ENCODE measurements at regions of chr1 and their contacts with region 1.

Region 1: DNA sequence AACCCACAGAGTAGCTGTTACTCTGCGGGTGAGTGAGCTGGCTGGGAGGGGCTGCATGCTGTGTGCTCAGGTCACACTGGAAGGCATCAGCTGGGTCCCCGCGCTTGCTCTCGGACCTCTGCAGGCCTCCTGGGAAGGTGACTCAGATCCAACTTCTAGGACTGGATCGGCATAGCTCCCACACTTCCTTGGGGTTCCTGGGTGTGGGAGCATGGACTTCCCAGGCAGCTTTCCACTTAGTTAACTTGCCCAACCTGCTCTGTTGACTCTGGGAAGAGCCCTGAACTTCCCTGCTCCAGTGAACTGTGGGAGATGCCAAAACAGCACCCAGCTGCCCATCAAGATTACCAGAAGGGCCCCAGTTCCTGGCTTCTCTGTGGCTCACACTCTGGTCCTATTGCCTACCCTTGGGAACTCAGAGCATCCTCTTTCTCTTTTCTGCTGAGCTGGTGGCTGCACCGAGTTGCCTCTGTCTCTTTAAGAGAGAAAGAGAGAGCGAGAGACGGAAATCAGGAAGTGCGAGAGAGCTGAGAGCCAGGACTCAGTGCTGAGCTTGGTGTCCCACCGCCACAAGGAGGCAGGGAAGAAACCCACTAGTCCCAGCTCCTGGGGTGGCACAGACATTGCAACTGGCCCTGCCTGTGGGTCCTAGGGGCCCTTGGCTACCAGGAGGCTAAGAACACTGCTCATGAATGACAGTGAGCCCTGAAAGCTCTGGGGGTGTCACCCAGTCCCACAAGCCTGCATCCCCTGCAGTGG is at the start of gene IKBKE:
- DNase-seq: peak; percentile 53
- H3K4me3 Mint-ChIP-seq: peak within 1 kb of the TSS; percentile 94
- H3K27ac Mint-ChIP-seq: peak within 1 kb of the TSS; percentile 94
- H3K4me1 Mint-ChIP-seq: peaks cover 80% of the 10 kb centered on the region
- H3K27me3 Mint-ChIP-seq: no peaks in the 10 kb centered on the region
- total RNA-seq, gene IKBKE: 33.8 and 33.9 TPM in 2 replicates

Region 2: DNA sequence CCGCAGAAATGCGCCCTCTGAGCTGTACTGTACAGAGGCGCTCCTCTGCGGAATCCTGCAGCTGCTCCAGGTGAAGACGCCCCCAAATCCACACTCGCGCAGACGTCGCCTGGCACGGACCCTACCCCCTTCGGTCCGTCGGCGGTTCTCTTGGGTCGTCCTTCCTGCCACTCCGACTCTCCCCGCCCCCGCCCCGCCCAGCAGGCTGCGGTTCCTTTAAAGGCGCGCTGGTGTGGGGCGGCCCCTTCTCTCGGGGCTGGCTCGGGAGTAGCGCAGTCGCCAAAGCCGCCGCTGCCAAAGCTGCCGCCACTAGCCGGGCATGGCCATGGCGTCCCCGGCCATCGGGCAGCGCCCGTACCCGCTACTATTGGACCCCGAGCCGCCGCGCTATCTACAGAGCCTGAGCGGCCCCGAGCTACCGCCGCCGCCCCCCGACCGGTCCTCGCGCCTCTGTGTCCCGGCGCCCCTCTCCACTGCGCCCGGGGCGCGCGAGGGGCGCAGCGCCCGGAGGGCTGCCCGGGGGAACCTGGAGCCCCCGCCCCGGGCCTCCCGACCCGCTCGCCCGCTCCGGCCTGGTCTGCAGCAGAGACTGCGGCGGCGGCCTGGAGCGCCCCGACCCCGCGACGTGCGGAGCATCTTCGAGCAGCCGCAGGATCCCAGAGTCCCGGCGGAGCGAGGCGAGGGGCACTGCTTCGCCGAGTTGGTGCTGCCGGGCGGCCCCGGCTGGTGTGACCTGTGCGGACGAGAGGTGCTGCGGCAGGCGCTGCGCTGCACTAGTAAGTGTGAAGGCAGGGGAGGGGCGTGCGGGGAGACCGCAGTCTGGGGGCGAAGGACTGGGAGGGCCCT is 37.4 kb after region 1 on chr1 and contains the start of gene RASSF5:
- intact Hi-C with region 1: loop called (anchors 5 kb)
- DNase-seq: peak; percentile 74
- H3K4me3 Mint-ChIP-seq: peak within 1 kb of the TSS; percentile 75
- H3K27ac Mint-ChIP-seq: no peak within 1 kb of the TSS
- H3K4me1 Mint-ChIP-seq: peaks cover 30% of the 10 kb centered on the region
- H3K27me3 Mint-ChIP-seq: peaks cover 18% of the 10 kb centered on the region
- total RNA-seq, gene RASSF5: 180 and 182 TPM in 2 replicates

Region 3: DNA sequence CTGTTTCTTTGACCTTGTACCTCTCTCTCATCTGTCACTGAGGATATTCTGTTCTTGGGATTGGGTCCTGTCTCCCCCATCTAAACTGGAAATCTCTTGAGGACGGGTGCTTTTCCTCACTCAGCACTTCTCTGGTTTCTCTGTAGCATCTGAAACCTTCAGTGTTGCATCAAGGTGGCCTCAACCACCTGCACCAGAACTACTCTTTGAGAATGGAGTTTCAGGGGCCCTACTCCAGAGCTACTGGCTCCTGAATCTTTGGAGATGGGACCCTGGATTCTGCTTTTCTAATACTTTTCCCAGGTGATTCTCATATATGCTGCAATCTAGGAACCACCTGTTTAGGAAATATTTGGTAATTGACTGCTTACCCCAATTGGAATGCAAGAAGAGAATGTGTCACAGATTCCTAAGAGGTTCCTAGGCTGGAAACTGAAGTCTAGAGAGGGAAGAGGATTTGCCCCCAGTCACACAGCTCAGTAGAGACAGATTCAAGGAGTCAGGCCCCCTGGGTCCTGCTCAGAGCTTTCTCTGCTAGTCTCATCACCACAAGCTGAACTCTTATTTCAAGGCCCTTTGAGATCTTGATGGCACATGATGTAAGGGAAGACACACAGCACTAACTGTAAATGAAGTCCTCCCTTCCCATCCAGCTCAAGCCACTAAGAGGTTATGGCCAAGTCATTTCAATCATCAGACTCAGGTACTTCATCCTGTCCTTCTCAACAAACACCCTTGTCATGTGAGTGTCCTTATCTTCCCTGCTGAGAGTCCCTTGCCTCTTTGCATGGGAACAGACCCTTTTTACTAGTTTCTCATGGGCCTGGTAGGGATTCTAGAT is 93.5 kb after region 1 on chr1:
- intact Hi-C with region 1: no loop called
- DNase-seq: no peak
- H3K4me3 Mint-ChIP-seq: peak overlapping the region; percentile 67
- H3K27ac Mint-ChIP-seq: peak overlapping the region; percentile 91
- H3K4me1 Mint-ChIP-seq: peaks cover 89% of the 10 kb centered on the region
- H3K27me3 Mint-ChIP-seq: no peaks in the 10 kb centered on the region

Region 4: DNA sequence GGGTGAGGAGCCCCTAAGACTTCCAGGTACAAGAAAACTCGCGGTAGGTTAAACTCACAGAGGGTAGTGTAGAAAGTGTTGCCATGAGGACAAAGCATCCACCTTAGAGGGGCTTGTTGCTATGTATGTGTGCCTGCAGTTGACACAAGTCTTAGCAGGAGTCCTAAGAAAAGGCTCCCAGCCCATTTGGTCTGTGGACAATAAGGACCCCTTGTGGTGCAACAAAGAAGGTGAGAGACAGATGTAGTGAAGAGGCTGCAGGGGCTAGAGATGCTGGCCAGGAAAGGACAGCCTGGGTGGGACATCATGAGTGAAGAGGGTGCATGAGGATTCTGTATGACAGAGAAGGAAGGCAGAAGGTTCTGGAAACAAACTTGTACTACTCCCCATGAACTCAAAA is 338.5 kb after region 1 on chr1:
- intact Hi-C with region 1: loop called (anchors 10 kb)
- DNase-seq: peak; percentile 47
- H3K4me3 Mint-ChIP-seq: no peak overlapping the region
- H3K27ac Mint-ChIP-seq: no peak overlapping the region
- H3K4me1 Mint-ChIP-seq: peaks cover 48% of the 10 kb centered on the region
- H3K27me3 Mint-ChIP-seq: peaks cover 3% of the 10 kb centered on the region

Region 5: DNA sequence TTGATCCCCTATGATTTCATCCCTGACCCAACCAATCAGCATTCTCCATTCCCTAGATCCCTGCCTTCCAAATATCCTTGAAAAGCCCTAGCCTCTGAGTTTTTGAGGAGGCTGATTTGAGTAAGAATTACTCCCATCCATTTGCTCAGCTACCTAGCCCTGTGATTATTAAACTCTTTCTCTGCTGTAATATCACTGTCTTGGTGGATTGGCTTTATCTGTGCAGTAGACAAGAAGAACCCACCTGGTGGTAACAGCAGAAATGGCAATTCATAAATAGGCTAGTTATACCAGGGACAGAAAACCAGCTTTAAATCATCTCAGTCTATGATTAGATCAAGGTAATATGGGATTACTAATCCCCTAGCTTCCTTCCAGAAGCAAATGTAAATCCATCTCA is 408.3 kb after region 1 on chr1:
- intact Hi-C with region 1: no loop called
- DNase-seq: no peak
- H3K4me3 Mint-ChIP-seq: no peak overlapping the region
- H3K27ac Mint-ChIP-seq: no peak overlapping the region
- H3K4me1 Mint-ChIP-seq: no peaks in the 10 kb centered on the region
- H3K27me3 Mint-ChIP-seq: peaks cover 6% of the 10 kb centered on the region